ENCODE measurements at regions of chr4 and their contacts with region 1.

Region 1: DNA sequence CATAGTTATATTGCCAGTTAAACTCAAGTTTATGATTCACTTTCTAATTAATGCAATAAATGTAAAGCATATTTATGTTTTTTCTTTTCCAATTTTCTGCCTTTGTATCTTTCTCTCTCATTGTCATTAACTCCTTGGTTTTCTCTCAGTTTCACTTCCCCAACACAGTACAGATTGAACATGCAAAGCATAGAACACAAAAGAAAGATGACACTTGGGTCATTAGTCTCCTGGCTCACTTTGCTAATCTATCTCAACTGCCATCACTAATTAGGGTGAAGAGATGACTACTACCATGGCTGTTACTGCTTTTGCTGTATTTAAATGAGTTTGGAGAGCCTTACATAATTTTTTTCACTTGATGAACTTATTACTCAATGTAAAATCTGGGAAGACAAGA is 12.3 kb upstream of the NAA11 start:
- DNase-seq: no peak
- ATAC-seq: no peak
- H3K4me3 ChIP-seq: no peak overlapping the region
- H3K4me3 Mint-ChIP-seq: no peak overlapping the region
- H3K27ac ChIP-seq: no peak overlapping the region
- H3K27ac Mint-ChIP-seq: no peak overlapping the region
- H3K4me1 ChIP-seq: no peaks in the 10 kb centered on the region
- H3K4me1 Mint-ChIP-seq: no peaks in the 10 kb centered on the region
- H3K27me3 ChIP-seq: no peaks in the 10 kb centered on the region
- H3K27me3 Mint-ChIP-seq: no peaks in the 10 kb centered on the region
- CTCF ChIP-seq: no peak

Region 2: DNA sequence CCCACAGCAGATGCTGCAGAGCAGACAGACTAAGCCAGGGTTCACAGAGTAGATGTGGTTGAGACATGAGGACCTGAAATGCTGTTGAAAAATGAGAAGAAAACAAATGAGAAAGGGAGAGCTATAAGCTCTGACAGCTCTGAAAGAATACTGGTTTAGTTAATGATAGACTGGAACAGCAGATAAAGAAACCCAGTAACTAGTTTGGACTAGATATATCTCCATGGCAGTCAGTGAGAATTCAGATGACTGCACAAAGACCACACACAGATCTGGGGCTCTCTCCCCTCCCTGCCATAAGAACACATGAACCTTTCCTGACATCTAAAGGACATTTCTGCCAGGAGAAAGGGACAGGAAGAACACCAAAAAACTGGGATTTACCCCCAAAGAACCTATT is 20.4 kb before region 1 on chr4:
- intact Hi-C with region 1: no loop called
- DNase-seq: no peak
- ATAC-seq: no peak
- H3K4me3 ChIP-seq: no peak overlapping the region
- H3K4me3 Mint-ChIP-seq: no peak overlapping the region
- H3K27ac ChIP-seq: no peak overlapping the region
- H3K27ac Mint-ChIP-seq: no peak overlapping the region
- H3K4me1 ChIP-seq: no peaks in the 10 kb centered on the region
- H3K4me1 Mint-ChIP-seq: peaks cover 0 to 7% of the 10 kb centered on the region in 2 donors
- H3K27me3 ChIP-seq: no peaks in the 10 kb centered on the region
- H3K27me3 Mint-ChIP-seq: no peaks in the 10 kb centered on the region
- CTCF ChIP-seq: no peak

Region 3: GRCh38 chr4:79366422-79366821 is 28.3 kb after region 1 on chr4:
- intact Hi-C with region 1: loop called (anchors 1 kb)
- DNase-seq: no peak
- ATAC-seq: no peak
- H3K4me3 ChIP-seq: no peak overlapping the region
- H3K4me3 Mint-ChIP-seq: no peak overlapping the region
- H3K27ac ChIP-seq: no peak overlapping the region
- H3K27ac Mint-ChIP-seq: no peak overlapping the region
- H3K4me1 ChIP-seq: no peaks in the 10 kb centered on the region
- H3K4me1 Mint-ChIP-seq: no peaks in the 10 kb centered on the region
- H3K27me3 ChIP-seq: no peaks in the 10 kb centered on the region
- H3K27me3 Mint-ChIP-seq: no peaks in the 10 kb centered on the region
- CTCF ChIP-seq: no peak

Region 4: DNA sequence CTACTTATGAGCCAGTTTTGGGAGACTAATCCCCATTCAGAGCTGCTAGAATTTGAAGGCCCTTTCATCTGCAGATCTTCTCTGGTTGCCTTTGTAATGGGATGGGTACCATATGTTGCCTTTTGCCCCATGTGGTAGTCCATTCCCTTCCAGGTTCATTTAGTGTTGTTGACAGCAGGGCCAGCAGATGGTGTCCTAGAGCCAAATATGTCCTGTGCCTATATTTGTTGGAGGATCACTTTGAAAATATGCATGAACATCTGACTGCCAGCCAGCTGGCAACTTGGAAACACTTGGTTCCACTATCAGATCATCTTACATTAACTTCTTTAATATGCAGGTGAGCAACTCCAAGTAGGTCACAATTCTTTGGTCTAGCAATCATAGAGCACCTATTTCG is 1027.8 kb after region 1 on chr4:
- intact Hi-C with region 1: no loop called
- DNase-seq: peak; percentile 42 to 78
- ATAC-seq: peak; percentile 70 to 88 (median 86)
- H3K4me3 ChIP-seq: no peak overlapping the region
- H3K4me3 Mint-ChIP-seq: no peak overlapping the region
- H3K27ac ChIP-seq: no peak overlapping the region
- H3K27ac Mint-ChIP-seq: no peak overlapping the region
- H3K4me1 ChIP-seq: peaks cover 3% of the 10 kb centered on the region
- H3K4me1 Mint-ChIP-seq: peaks cover 4 to 17% of the 10 kb centered on the region in 2 donors
- H3K27me3 ChIP-seq: peaks cover 2% of the 10 kb centered on the region
- H3K27me3 Mint-ChIP-seq: peaks cover 0 to 5% of the 10 kb centered on the region in 2 donors
- CTCF ChIP-seq: peak; percentile 71

Measured in natural killer cell (primary cell).